WTC11 (cell line): ENCODE measurements at regions of chr15 and their contacts with region 1.

Region 1: DNA sequence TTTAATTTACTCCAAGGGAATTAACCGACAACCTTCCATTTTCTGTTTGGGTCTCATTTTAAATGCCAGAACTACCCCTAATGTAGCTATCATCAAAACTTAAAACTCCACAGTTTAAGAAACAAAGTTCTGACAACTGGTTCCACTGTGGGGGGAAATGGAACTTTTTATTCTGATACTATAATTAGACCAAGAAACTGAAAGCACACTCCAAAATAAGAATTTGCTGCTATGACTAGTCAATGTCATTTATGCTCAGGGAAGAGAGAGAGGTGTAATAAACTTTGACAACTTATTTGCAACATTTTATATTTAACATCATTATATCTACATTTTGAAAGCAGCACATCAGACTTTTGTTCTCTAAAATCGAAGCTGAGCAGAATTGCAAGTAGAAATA is 169.2 kb downstream of the ANXA2 start:
- DNase-seq: no peak
- ATAC-seq: no peak
- H3K4me3 Mint-ChIP-seq: no peak overlapping the region
- H3K27ac Mint-ChIP-seq: no peak overlapping the region
- H3K4me1 Mint-ChIP-seq: peaks cover 20% of the 10 kb centered on the region
- H3K27me3 Mint-ChIP-seq: no peaks in the 10 kb centered on the region; the same call in 1 of the 2 replicates
- CTCF ChIP-seq: no peak

Region 2: GRCh38 chr15:60086681-60087429 is 141.8 kb before region 1 on chr15:
- CTCF ChIA-PET with region 1: no interaction called
- POLR2A ChIA-PET with region 1: interaction called, 10 read pairs
- DNase-seq: no peak
- ATAC-seq: no peak
- H3K4me3 Mint-ChIP-seq: no peak overlapping the region
- H3K27ac Mint-ChIP-seq: no peak overlapping the region
- H3K4me1 Mint-ChIP-seq: peaks cover 20% of the 10 kb centered on the region
- H3K27me3 Mint-ChIP-seq: peaks cover 3% of the 10 kb centered on the region
- CTCF ChIP-seq: no peak